ENCODE measurements at regions of chr2 and their contacts with region 1.

Region 1: DNA sequence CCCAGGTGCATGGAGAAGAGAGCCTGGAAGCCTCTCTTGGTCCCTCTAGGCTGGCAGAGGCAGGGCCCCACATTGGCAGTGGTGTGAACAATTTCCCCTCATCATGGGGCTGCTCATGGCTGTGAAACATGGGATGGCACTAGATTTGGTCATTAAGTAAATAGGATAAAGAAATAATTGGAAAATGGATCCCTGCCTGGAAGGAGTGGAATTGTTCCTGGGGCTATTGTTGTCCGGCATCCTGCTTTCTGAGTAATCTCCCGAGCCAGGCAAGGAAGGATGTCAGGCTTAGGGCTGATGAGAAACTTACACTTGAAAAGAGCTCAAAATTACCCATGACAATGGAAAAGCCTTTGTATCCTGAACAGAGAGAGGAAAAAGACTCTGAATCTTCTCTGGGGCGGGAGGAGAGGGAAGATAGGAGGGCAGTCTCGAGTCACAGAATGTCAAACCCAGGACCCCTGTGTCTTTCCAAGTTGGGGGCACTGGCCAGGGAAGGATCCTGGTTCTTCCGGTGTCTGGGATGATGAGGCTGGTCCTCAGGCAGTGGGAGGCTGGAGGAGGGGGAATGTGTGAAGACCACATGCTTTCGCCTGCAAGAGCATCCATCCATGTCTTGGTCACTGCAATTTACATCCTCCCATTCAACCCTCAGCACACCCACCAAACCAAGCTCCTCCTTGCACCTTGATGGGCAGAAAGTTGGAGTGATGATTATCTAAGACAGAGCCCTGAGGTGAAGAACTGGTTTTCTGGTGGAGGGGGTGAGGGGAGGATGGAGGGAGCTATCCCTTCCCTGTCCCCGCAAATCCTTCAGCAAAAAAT is 27.1 kb upstream of the STEAP3 start:
- DNase-seq: no peak
- H3K4me3 ChIP-seq: no peak overlapping the region
- H3K4me3 Mint-ChIP-seq: no peak overlapping the region
- H3K27ac Mint-ChIP-seq: no peak overlapping the region
- H3K4me1 ChIP-seq: peaks cover 34% of the 10 kb centered on the region
- H3K4me1 Mint-ChIP-seq: peaks cover 28% of the 10 kb centered on the region
- H3K27me3 ChIP-seq: no peaks in the 10 kb centered on the region
- H3K27me3 Mint-ChIP-seq: no peaks in the 10 kb centered on the region
- CTCF ChIP-seq: no peak

Region 2: GRCh38 chr2:119223521-119224390 is 27.2 kb after region 1 on chr2 and contains the start of gene STEAP3:
- CTCF ChIA-PET with region 1: no interaction called
- POLR2A ChIA-PET with region 1: no interaction called
- intact Hi-C with region 1: loop called (anchors 2 kb)
- DNase-seq: peak; percentile 90 to 93
- H3K4me3 ChIP-seq: peak within 1 kb of the TSS; percentile 77
- H3K4me3 Mint-ChIP-seq: peak within 1 kb of the TSS; percentile 68
- H3K27ac Mint-ChIP-seq: no peak within 1 kb of the TSS
- H3K4me1 ChIP-seq: peaks cover 25% of the 10 kb centered on the region
- H3K4me1 Mint-ChIP-seq: no peaks in the 10 kb centered on the region
- H3K27me3 ChIP-seq: no peaks in the 10 kb centered on the region
- H3K27me3 Mint-ChIP-seq: no peaks in the 10 kb centered on the region
- CTCF ChIP-seq: no peak
- total RNA-seq, gene STEAP3: 20.1 and 20.4 TPM in 2 replicates

Region 3: DNA sequence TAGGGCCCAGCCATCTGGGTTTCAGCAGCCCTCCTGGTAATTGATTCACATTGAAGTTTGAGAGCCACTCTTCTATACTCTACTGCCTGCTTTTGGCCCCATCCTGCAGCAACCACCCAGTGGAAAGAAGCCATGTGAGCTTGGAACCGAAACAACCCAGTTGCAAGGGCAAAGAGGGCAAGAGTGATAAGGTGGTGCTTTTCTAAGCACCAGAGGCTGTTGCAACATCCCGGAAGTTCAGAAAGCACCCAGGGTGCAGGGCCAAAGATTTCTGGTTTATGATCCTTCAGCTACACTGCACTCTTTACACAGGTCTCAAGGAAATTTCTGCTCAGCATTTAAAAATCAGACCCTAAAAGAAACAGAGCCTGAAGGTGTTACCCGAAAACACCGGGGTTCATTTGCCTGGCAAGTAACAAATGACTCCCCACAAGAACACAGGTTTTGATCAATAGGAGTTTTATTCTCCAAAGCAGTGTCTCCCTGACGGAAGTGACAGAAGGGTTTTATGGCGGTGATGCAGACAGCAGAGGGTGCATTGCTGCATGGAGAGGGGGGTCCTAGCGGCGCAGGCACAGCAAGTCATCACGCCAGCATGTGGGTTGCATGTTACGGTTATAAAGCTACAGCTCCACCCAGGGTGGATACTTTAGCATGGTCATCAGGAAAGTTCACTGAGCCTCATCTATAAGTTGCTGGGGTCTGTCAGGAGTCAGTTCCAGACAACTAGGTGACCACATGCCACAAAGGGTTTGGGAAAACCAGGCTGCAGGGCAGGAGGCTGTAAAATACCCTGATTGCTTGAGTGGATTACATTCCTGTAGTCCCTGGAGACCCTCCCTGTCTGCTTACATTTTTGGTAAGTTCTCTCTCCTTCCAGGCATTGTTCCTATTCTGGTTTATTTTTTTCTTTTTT is 206.4 kb after region 1 on chr2:
- CTCF ChIA-PET with region 1: no interaction called
- POLR2A ChIA-PET with region 1: no interaction called
- intact Hi-C with region 1: no loop called
- DNase-seq: peak in 1 of 2 experiments; percentile 23
- H3K4me3 ChIP-seq: no peak overlapping the region
- H3K4me3 Mint-ChIP-seq: no peak overlapping the region
- H3K27ac Mint-ChIP-seq: no peak overlapping the region
- H3K4me1 ChIP-seq: peaks cover 8% of the 10 kb centered on the region
- H3K4me1 Mint-ChIP-seq: no peaks in the 10 kb centered on the region
- H3K27me3 ChIP-seq: no peaks in the 10 kb centered on the region
- H3K27me3 Mint-ChIP-seq: no peaks in the 10 kb centered on the region
- CTCF ChIP-seq: no peak